Mammary epithelial cell (primary cell): ENCODE measurements at regions of chr14 and their contacts with region 1.

Region 1: DNA sequence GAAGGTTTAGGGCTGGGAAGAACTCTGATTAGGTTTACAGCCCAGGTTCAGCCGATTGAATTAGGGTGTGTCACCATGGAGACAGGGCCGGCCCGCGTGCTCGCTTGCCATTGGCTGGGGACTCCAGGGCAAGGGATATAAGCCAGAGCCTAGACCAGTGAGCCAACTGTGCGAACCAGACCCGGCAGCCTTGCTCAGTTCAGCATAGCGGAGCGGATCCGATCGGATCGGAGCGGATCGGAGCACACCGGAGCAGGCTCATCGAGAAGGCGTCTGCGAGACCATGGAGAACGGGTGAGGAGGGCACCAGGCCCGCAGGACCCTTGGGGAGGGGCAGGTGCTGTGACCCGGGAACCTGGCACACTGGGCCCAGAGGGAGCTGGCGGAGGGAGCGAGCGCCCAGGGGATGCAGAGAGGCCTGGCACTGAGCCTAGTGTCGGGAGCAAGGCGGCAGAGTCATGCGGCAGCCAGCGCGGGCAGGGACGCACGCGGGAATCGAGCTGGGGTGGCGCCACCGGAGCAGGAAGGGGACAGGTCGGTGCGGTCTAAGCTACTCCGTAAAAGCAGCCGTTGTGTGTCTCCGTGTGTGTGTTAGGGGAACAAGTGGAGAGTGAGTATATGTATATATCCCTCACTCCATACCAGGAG is at the start of gene PNP:
- DNase-seq: peak; percentile 88
- H3K4me3 ChIP-seq: peak within 1 kb of the TSS; percentile 55 to 83 (median 79)
- H3K27ac ChIP-seq: peak within 1 kb of the TSS; percentile 74
- H3K4me1 ChIP-seq: peaks cover 7% of the 10 kb centered on the region
- H3K27me3 ChIP-seq: no peaks in the 10 kb centered on the region
- CTCF ChIP-seq: no peak
- total RNA-seq, gene PNP: 52.8 to 106 TPM

Region 2: GRCh38 chr14:20530771-20531571 is 61.6 kb after region 1 on chr14:
- CTCF ChIA-PET with region 1: no interaction called
- dilution Hi-C with region 1: no loop called
- in situ Hi-C with region 1: no loop called
- intact Hi-C with region 1: no loop called
- DNase-seq: peak; percentile 58
- H3K4me3 ChIP-seq: no peak overlapping the region
- H3K27ac ChIP-seq: no peak overlapping the region
- H3K4me1 ChIP-seq: no peaks in the 10 kb centered on the region
- H3K27me3 ChIP-seq: no peaks in the 10 kb centered on the region
- CTCF ChIP-seq: peak; percentile 70 to 79

Region 3: DNA sequence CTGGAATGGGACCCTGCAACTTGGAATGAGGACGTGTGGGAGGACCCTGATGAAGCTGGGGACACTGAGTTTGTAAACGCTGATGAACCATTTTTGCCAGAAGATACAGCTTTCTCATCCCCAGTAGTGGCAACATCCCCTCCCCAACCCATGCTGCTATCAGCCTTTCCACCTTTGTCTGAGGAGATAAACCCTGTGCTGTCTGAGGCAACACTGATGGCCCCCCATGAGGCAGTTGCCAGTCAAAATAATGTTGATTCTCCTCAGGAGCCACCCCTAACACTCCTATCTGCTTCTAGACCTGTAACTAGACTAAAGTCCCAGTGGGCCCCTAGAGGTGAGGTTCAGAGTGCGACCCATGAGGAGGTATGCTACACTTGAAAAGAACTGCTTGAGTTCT is 99.0 kb after region 1 on chr14:
- CTCF ChIA-PET with region 1: no interaction called
- dilution Hi-C with region 1: loop called (anchors 5 kb)
- in situ Hi-C with region 1: no loop called
- intact Hi-C with region 1: no loop called
- DNase-seq: no peak
- H3K4me3 ChIP-seq: no peak overlapping the region
- H3K27ac ChIP-seq: no peak overlapping the region
- H3K4me1 ChIP-seq: no peaks in the 10 kb centered on the region
- H3K27me3 ChIP-seq: no peaks in the 10 kb centered on the region
- CTCF ChIP-seq: no peak